Mammary epithelial cell (primary cell): ENCODE measurements at regions of chr1 and their contacts with region 1.

Region 1: DNA sequence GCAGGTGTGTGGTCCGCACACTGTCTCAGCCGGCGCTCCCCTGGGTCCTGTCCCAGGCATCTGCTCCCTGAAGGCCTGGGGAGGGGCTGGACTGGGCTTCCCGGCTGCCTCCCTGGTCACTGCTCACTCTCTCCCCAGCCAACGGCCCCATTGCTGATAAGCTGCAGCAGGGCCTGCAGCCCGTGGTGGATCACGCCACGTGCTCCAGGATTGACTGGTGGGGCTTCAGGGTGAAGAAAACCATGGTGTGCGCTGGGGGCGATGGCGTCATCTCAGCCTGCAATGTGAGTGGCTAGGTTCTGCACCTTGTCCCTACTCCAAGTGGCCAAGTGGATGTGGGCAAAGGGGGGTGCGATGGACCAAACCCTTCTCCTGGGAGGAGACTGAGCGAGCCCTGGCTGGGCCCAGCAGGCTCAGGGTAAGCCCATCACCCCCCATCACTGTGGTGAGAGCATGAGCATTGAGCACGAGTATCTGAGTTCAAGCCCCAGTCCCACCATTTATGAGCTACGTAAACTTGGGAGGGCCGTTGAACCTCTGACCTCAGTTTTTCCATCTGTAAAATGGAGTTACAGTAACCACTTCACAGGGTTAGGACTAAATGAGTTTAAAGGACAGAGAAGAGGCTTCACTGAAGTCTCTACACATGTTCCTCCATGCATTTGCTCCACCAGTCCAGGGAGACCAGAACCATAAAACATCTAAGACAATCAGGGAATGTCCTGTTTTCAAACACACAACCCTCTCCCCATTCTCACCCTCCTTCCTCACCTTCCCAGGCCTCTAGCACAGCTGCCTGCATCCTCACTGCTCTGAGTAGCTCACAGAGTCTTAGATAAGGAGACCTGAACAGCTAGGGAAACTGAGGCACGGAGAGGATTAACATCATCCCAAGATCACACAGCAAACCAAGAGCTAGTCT is 6.5 kb downstream of the CTRC start:
- DNase-seq: no peak
- H3K4me3 ChIP-seq: no peak overlapping the region
- H3K27ac ChIP-seq: no peak overlapping the region
- H3K4me1 ChIP-seq: no peaks in the 10 kb centered on the region
- H3K27me3 ChIP-seq: no peaks in the 10 kb centered on the region
- CTCF ChIP-seq: no peak

Region 2: GRCh38 chr1:15405121-15405793 is 39.5 kb before region 1 on chr1:
- CTCF ChIA-PET with region 1: no interaction called
- dilution Hi-C with region 1: no loop called
- in situ Hi-C with region 1: no loop called
- intact Hi-C with region 1: no loop called
- DNase-seq: no peak
- H3K4me3 ChIP-seq: no peak overlapping the region
- H3K27ac ChIP-seq: no peak overlapping the region
- H3K4me1 ChIP-seq: peaks cover 21% of the 10 kb centered on the region
- H3K27me3 ChIP-seq: no peaks in the 10 kb centered on the region
- CTCF ChIP-seq: no peak

Region 3: GRCh38 chr1:15492596-15492995 is 47.9 kb after region 1 on chr1:
- CTCF ChIA-PET with region 1: no interaction called
- dilution Hi-C with region 1: loop called (anchors 5 kb)
- in situ Hi-C with region 1: no loop called
- intact Hi-C with region 1: no loop called
- DNase-seq: no peak
- H3K4me3 ChIP-seq: no peak overlapping the region
- H3K27ac ChIP-seq: no peak overlapping the region
- H3K4me1 ChIP-seq: no peaks in the 10 kb centered on the region
- H3K27me3 ChIP-seq: no peaks in the 10 kb centered on the region
- CTCF ChIP-seq: no peak